ENCODE measurements at regions of chr2 and their contacts with region 1.

Region 1: DNA sequence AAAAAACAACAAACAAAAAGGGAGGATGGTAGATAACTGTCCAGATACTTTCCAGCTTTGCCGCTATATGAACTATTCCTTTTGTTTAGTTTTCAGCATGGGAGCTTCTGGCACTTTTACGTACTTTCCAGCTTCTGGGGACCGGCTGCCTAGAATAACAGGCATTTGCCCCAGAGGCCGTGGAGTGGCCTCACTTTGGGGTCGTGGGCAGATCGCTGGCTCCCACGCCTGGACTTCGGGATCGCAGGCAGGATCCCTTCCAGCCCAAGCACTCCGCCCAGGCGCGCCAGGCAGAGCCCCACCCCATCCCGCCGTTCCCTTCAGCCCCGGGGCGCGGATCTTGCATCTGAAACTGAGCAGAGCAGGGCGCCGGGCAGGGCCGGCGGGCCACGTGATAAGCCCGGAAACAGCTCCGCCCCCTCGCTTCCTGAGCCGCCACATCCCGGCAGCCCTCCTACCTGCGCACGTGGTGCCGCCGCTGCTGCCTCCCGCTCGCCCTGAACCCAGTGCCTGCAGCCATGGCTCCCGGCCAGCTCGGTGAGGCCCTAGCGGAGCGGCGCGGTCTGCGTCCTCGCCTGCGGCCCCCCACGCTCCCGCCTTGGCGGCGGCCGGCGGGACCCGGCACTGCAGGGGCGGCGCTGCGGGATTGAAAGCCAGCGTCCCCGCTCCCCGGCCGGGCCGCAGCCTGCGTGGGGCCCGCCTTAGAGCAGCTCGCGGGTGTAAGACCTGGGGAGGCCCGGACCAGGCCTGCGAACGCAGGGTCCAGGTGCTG is at the start of gene ATIC:
- DNase-seq: peak; percentile 70
- ATAC-seq: peak; percentile 97
- H3K4me3 ChIP-seq: peak within 1 kb of the TSS; percentile 86
- H3K27ac ChIP-seq: peak within 1 kb of the TSS; percentile 97
- H3K4me1 ChIP-seq: no peaks in the 10 kb centered on the region; the same call in 1 of the 2 replicates
- H3K27me3 ChIP-seq: no peaks in the 10 kb centered on the region
- CTCF ChIP-seq: 0 out of 6 replicates have a peak, but pooled peaks of 1 of the 3 experiments have one; percentile 1
- EP300 ChIP-seq: no peak
- POLR2A ChIP-seq: peak; percentile 98
- RAD21 ChIP-seq: no peak
- polyA plus RNA-seq, gene ATIC: 313 to 518 TPM

Region 2: GRCh38 chr2:215293879-215294278 is 17.9 kb before region 1 on chr2:
- CTCF ChIA-PET with region 1: interaction called, 3 read pairs
- POLR2A ChIA-PET with region 1: interaction called, 11 read pairs
- RAD21 ChIA-PET with region 1: interaction called, 3 read pairs
- SMC1A ChIA-PET with region 1: interaction called, 7 read pairs
- in situ Hi-C with region 1: no loop called
- intact Hi-C with region 1: no loop called
- DNase-seq: no peak
- ATAC-seq: peak; percentile 95
- H3K4me3 ChIP-seq: no peak overlapping the region
- H3K27ac ChIP-seq: no peak overlapping the region
- H3K4me1 ChIP-seq: no peaks in the 10 kb centered on the region
- H3K27me3 ChIP-seq: no peaks in the 10 kb centered on the region
- CTCF ChIP-seq: no peak
- EP300 ChIP-seq: no peak
- POLR2A ChIP-seq: no peak
- RAD21 ChIP-seq: no peak

Region 3: GRCh38 chr2:215828517-215829184 is 516.8 kb after region 1 on chr2:
- CTCF ChIA-PET with region 1: no interaction called
- POLR2A ChIA-PET with region 1: no interaction called
- RAD21 ChIA-PET with region 1: no interaction called
- SMC1A ChIA-PET with region 1: no interaction called
- in situ Hi-C with region 1: no loop called
- intact Hi-C with region 1: loop called (anchors 10 kb)
- DNase-seq: no peak
- ATAC-seq: peak; percentile 80
- H3K4me3 ChIP-seq: no peak overlapping the region
- H3K27ac ChIP-seq: no peak overlapping the region
- H3K4me1 ChIP-seq: peaks cover 5% of the 10 kb centered on the region
- H3K27me3 ChIP-seq: no peaks in the 10 kb centered on the region
- CTCF ChIP-seq: peak; percentile 54 to 73 (median 68)
- EP300 ChIP-seq: no peak
- POLR2A ChIP-seq: no peak
- RAD21 ChIP-seq: peak; percentile 80

Measured in GM12878 (cell line).